ENCODE measurements at regions of chr12 and their contacts with region 1.

Region 1: DNA sequence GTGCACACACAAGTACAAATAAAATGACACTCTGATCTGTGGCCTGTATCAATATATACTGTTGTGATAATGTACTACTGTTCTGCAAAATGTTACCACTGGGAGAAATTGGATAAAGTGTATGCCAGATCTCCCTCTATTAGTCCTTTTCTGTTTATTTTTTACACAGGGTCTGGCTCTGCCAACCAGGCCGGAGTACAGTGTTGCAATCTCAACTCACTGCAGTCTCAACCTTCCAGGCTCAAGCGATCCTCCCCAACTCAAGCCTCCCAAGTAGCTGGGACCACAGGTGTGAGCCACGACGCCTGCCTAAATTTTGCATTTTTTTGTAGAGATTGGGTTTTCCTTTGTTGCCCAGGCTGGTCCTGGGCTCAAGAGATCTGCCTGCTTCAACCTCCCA is 1.9 kb downstream of the NT5DC3 start:
- DNase-seq: no peak
- H3K4me3 ChIP-seq: no peak overlapping the region
- H3K27ac ChIP-seq: no peak overlapping the region
- H3K4me1 ChIP-seq: peaks cover 7% of the 10 kb centered on the region
- H3K27me3 ChIP-seq: no peaks in the 10 kb centered on the region
- CTCF ChIP-seq: no peak

Region 2: GRCh38 chr12:103197725-103198388 is 641.2 kb before region 1 on chr12:
- CTCF ChIA-PET with region 1: no interaction called
- POLR2A ChIA-PET with region 1: no interaction called
- intact Hi-C with region 1: no loop called
- DNase-seq: no peak
- H3K4me3 ChIP-seq: no peak overlapping the region
- H3K27ac ChIP-seq: no peak overlapping the region
- H3K4me1 ChIP-seq: no peaks in the 10 kb centered on the region
- H3K27me3 ChIP-seq: no peaks in the 10 kb centered on the region
- CTCF ChIP-seq: no peak

Region 3: GRCh38 chr12:103799870-103800771 is 39.0 kb before region 1 on chr12:
- CTCF ChIA-PET with region 1: no interaction called
- POLR2A ChIA-PET with region 1: no interaction called
- intact Hi-C with region 1: loop called (anchors 5 kb)
- DNase-seq: peak; percentile 92
- H3K4me3 ChIP-seq: peak overlapping the region; percentile 17
- H3K27ac ChIP-seq: peak overlapping the region; percentile 94
- H3K4me1 ChIP-seq: peaks cover 53% of the 10 kb centered on the region
- H3K27me3 ChIP-seq: no peaks in the 10 kb centered on the region
- CTCF ChIP-seq: no peak

Measured in A673 (cell line).